ENCODE measurements at regions of chr10 and their contacts with region 1.

Region 1: GRCh38 chr10:102151774-102152544 is at the start of gene NOLC1:
- DNase-seq: peak; percentile 98 to 100 (median 100)
- ATAC-seq: peak; percentile 93
- H3K4me3 ChIP-seq: peak within 1 kb of the TSS; percentile 80
- H3K4me3 Mint-ChIP-seq: peak within 1 kb of the TSS; percentile 91
- H3K27ac ChIP-seq: peak within 1 kb of the TSS; percentile 89 to 93
- H3K27ac Mint-ChIP-seq: peak within 1 kb of the TSS; percentile 90
- H3K4me1 ChIP-seq: peaks cover 42% of the 10 kb centered on the region
- H3K4me1 Mint-ChIP-seq: peaks cover 50% of the 10 kb centered on the region
- H3K27me3 ChIP-seq: no peaks in the 10 kb centered on the region
- H3K27me3 Mint-ChIP-seq: no peaks in the 10 kb centered on the region
- CTCF ChIP-seq: no peak
- total RNA-seq, gene NOLC1: 34.2 to 36.1 TPM

Region 2: DNA sequence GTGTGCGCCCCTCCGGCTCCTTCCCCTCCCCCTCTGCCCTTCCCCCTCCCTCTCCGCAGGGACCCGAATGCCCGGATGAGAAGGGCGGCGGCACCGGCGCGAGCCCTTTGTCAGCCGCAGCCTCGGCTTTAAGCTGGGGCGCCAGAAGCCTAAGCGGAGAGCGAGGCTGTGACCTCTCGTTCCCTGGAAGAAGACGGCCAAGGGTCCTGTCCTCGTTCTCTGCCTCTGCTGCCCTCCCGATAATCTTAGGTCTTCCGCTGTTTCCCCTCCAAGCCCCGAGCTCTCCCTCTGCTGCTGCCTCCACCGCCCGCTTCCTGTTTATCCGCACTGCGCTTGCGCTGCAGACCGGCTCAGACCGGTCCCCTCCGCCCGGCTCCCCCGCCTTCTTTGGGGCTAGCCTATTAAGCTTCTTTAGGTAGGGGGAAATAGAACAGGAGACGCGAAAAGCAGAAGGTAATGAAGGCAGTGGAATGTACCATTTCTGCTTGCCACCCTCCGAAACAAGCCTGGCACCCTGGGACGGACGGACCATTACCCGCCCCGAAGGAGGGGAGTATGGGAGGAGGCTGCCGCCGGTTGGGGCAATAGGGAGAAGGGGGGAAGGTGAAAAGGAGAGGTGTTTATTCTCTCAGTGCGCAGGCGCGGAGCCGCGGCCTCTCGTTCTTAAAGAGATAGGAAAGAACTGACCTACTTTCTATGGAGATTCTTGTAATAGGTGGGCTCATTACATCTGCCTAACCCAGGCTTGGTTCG is 333.7 kb before region 1 on chr10 and contains the start of gene OGA:
- CTCF ChIA-PET with region 1: no interaction called
- POLR2A ChIA-PET with region 1: interaction called, 14 read pairs
- intact Hi-C with region 1: loop called in 1 of 2 experiments (anchors 1 kb)
- DNase-seq: peak; percentile 92 to 100 (median 98)
- ATAC-seq: peak; percentile 87
- H3K4me3 ChIP-seq: peak within 1 kb of the TSS; percentile 97
- H3K4me3 Mint-ChIP-seq: peak within 1 kb of the TSS; percentile 99
- H3K27ac ChIP-seq: peak within 1 kb of the TSS; percentile 82 to 87
- H3K27ac Mint-ChIP-seq: peak within 1 kb of the TSS; percentile 96
- H3K4me1 ChIP-seq: peaks cover 29% of the 10 kb centered on the region
- H3K4me1 Mint-ChIP-seq: peaks cover 48% of the 10 kb centered on the region
- H3K27me3 ChIP-seq: no peaks in the 10 kb centered on the region
- H3K27me3 Mint-ChIP-seq: no peaks in the 10 kb centered on the region
- CTCF ChIP-seq: no peak
- total RNA-seq, gene OGA: 395 to 416 TPM

Region 3: GRCh38 chr10:102055647-102056419 is 96.1 kb before region 1 on chr10 and contains the start of gene ARMH3:
- CTCF ChIA-PET with region 1: no interaction called
- POLR2A ChIA-PET with region 1: interaction called, 4 read pairs
- intact Hi-C with region 1: loop called (anchors 1 to 2 kb)
- DNase-seq: peak; percentile 75 to 96 (median 84)
- ATAC-seq: peak; percentile 93
- H3K4me3 ChIP-seq: peak within 1 kb of the TSS; percentile 84
- H3K4me3 Mint-ChIP-seq: peak within 1 kb of the TSS; percentile 96
- H3K27ac ChIP-seq: peak within 1 kb of the TSS; percentile 70 to 83
- H3K27ac Mint-ChIP-seq: peak within 1 kb of the TSS; percentile 87
- H3K4me1 ChIP-seq: peaks cover 48% of the 10 kb centered on the region
- H3K4me1 Mint-ChIP-seq: peaks cover 45% of the 10 kb centered on the region
- H3K27me3 ChIP-seq: no peaks in the 10 kb centered on the region
- H3K27me3 Mint-ChIP-seq: no peaks in the 10 kb centered on the region
- CTCF ChIP-seq: no peak
- total RNA-seq, gene ARMH3: 17.7 to 18.9 TPM

Region 4: GRCh38 chr10:102114861-102115618 is 36.9 kb before region 1 on chr10:
- CTCF ChIA-PET with region 1: no interaction called
- POLR2A ChIA-PET with region 1: interaction called, 6 read pairs
- intact Hi-C with region 1: loop called (anchors 1 to 5 kb)
- DNase-seq: peak; percentile 65 to 90 (median 84)
- ATAC-seq: peak; percentile 60
- H3K4me3 ChIP-seq: peak overlapping the region; percentile 58
- H3K4me3 Mint-ChIP-seq: peak overlapping the region; percentile 89
- H3K27ac ChIP-seq: peak overlapping the region; percentile 76 to 96
- H3K27ac Mint-ChIP-seq: peak overlapping the region; percentile 89
- H3K4me1 ChIP-seq: peaks cover 77% of the 10 kb centered on the region
- H3K4me1 Mint-ChIP-seq: peaks cover 73% of the 10 kb centered on the region
- H3K27me3 ChIP-seq: no peaks in the 10 kb centered on the region
- H3K27me3 Mint-ChIP-seq: no peaks in the 10 kb centered on the region
- CTCF ChIP-seq: no peak

Region 5: GRCh38 chr10:102245101-102245931 is 93.4 kb after region 1 on chr10 and contains the start of gene GBF1:
- CTCF ChIA-PET with region 1: no interaction called
- POLR2A ChIA-PET with region 1: no interaction called
- intact Hi-C with region 1: loop called in 1 of 2 experiments (anchors 5 kb)
- DNase-seq: peak; percentile 76 to 99 (median 84)
- ATAC-seq: peak; percentile 89
- H3K4me3 ChIP-seq: peak within 1 kb of the TSS; percentile 74
- H3K4me3 Mint-ChIP-seq: peak within 1 kb of the TSS; percentile 96
- H3K27ac ChIP-seq: peak within 1 kb of the TSS; percentile 84 to 88
- H3K27ac Mint-ChIP-seq: peak within 1 kb of the TSS; percentile 86
- H3K4me1 ChIP-seq: peaks cover 60% of the 10 kb centered on the region
- H3K4me1 Mint-ChIP-seq: peaks cover 58% of the 10 kb centered on the region
- H3K27me3 ChIP-seq: peaks cover 20 to 28% of the 10 kb centered on the region in 2 experiments
- H3K27me3 Mint-ChIP-seq: peaks cover 40% of the 10 kb centered on the region
- CTCF ChIP-seq: no peak
- total RNA-seq, gene GBF1: 28.8 to 30.9 TPM

Region 6: DNA sequence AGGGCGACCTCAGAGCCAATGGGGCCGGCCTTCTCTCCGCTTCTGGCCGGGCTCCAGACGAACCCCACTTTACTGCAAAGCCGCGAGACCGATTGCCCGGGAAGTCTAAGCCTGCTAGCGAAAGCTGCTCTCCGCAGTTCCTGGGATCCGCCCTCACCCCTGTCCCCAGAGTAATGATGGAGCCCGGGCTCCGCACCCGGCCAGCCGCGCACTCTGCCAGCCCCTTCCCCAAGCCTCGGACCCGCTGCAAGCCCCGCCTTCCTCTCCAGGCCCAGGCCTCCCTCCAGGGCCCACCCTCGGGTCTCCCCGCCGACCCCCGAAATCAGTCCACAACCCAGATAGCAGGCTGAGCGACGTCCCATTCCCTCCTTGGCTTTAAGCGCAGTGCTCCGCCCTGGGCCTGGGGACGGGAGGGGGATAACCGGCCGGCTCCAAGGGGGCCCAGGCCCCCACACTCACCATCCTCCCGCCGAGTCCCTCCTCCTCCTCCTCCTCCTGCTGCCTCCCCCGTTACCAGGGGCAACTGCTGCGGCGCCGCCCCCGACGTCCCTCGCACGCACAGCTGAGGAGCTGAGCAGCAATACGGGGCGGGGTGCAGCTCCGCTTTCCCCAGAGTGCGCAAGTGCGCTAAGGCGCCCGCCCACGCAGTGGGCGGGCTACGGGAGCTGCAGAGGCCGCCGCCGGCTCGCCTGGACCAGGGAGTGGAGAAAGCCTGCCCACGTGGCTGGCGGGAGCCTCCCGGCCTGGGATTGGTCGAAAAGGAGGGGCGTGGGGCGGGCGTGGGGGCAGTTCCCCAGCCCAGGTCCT is 562.1 kb after region 1 on chr10 and contains the start of gene ARL3:
- CTCF ChIA-PET with region 1: no interaction called
- POLR2A ChIA-PET with region 1: no interaction called
- intact Hi-C with region 1: loop called in 1 of 2 experiments (anchors 10 kb)
- DNase-seq: peak; percentile 82 to 98 (median 92)
- ATAC-seq: peak; percentile 89
- H3K4me3 ChIP-seq: peak within 1 kb of the TSS; percentile 98
- H3K4me3 Mint-ChIP-seq: peak within 1 kb of the TSS; percentile 93
- H3K27ac ChIP-seq: peak within 1 kb of the TSS; percentile 84 to 86
- H3K27ac Mint-ChIP-seq: peak within 1 kb of the TSS; percentile 81
- H3K4me1 ChIP-seq: peaks cover 34% of the 10 kb centered on the region
- H3K4me1 Mint-ChIP-seq: peaks cover 61% of the 10 kb centered on the region
- H3K27me3 ChIP-seq: no peaks in the 10 kb centered on the region
- H3K27me3 Mint-ChIP-seq: no peaks in the 10 kb centered on the region
- CTCF ChIP-seq: peak; percentile 46
- total RNA-seq, gene ARL3: 0.99 to 1.3 TPM

Region 7: GRCh38 chr10:103367782-103368518 is 1216.0 kb after region 1 on chr10 and contains the start of gene TAF5:
- CTCF ChIA-PET with region 1: no interaction called
- POLR2A ChIA-PET with region 1: no interaction called
- intact Hi-C with region 1: loop called in 1 of 2 experiments (anchors 2 kb)
- DNase-seq: peak; percentile 78 to 96 (median 85)
- ATAC-seq: peak; percentile 61
- H3K4me3 ChIP-seq: peak within 1 kb of the TSS; percentile 60
- H3K4me3 Mint-ChIP-seq: peak within 1 kb of the TSS; percentile 100
- H3K27ac ChIP-seq: peak within 1 kb of the TSS; percentile 55 to 83
- H3K27ac Mint-ChIP-seq: peak within 1 kb of the TSS; percentile 80
- H3K4me1 ChIP-seq: peaks cover 22% of the 10 kb centered on the region
- H3K4me1 Mint-ChIP-seq: peaks cover 23% of the 10 kb centered on the region
- H3K27me3 ChIP-seq: no peaks in the 10 kb centered on the region
- H3K27me3 Mint-ChIP-seq: no peaks in the 10 kb centered on the region
- CTCF ChIP-seq: peak; percentile 22
- total RNA-seq, gene TAF5: 3.8 to 4.0 TPM